A673 (cell line): ENCODE measurements at regions of chr7 and their contacts with region 1.

Region 1: DNA sequence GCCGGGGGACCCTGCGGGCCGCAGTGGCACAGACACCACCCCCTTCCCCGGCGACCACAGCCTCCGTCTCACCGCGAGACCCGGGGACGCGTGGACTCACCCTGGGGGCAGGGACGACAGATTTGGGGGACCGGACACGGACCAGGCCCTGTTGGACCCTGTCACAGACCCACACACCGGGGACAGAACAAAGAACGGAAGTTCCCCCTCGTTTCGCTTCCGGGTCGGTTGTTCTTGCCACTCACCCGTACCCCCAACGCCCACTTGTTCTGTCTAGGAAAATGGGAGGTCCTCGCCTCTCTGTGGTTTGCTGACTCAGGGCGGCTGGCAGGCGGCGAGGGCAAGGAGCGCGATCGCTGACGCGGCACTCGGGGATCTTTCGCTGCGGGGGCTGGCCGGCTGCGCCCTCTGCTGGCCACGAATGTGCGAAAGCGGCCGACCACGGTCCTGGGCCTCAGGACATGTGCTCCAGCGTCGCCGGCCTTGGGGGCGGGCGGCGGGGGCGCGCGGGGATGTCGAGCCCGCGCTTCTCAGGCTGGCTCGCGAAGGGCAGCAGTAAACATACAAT is at the start of gene ZNF3:
- DNase-seq: peak; percentile 100
- H3K4me3 ChIP-seq: peak within 1 kb of the TSS; percentile 73
- H3K27ac ChIP-seq: peak within 1 kb of the TSS; percentile 81
- H3K4me1 ChIP-seq: peaks cover 12% of the 10 kb centered on the region
- H3K27me3 ChIP-seq: no peaks in the 10 kb centered on the region
- CTCF ChIP-seq: peak; percentile 98
- total RNA-seq, gene ZNF3: 50.2 and 50.8 TPM in 2 replicates

Region 2: DNA sequence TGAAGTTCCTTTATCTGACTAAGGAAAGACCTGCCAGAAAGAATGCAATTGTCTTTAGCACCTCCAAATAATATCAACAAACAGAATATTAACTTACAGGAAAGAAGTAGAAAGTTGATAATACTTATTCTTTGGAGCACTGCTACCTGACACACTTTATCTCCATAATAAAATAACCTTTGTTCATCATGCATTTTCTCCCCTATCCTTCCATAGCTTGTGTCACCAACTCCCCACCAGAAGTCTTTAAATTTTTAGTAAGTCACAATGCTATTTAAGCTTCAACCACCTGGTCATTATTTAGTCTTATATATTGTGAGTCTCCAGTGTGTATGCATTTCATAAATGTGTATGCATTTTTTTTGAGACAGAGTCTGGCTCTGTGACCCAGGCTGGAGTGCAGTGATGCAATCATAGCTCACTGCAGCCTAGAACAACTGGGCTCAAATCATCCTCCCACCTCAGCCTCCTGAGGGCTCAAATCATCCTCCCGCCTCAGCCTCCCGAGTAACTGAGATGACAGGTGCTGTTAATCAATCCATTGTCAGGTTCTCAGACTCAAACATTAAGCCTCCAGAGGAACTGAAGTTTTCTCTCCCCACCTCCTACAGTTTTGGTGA is 261.1 kb before region 1 on chr7:
- CTCF ChIA-PET with region 1: no interaction called
- POLR2A ChIA-PET with region 1: interaction called, 11 read pairs
- intact Hi-C with region 1: no loop called
- DNase-seq: no peak
- H3K4me3 ChIP-seq: no peak overlapping the region
- H3K27ac ChIP-seq: no peak overlapping the region
- H3K4me1 ChIP-seq: no peaks in the 10 kb centered on the region
- H3K27me3 ChIP-seq: peaks cover 21% of the 10 kb centered on the region
- CTCF ChIP-seq: no peak

Region 3: GRCh38 chr7:99949638-99950228 is 131.9 kb before region 1 on chr7:
- CTCF ChIA-PET with region 1: no interaction called
- POLR2A ChIA-PET with region 1: interaction called, 17 read pairs
- intact Hi-C with region 1: no loop called
- DNase-seq: peak; percentile 22
- H3K4me3 ChIP-seq: no peak overlapping the region
- H3K27ac ChIP-seq: no peak overlapping the region
- H3K4me1 ChIP-seq: no peaks in the 10 kb centered on the region
- H3K27me3 ChIP-seq: no peaks in the 10 kb centered on the region
- CTCF ChIP-seq: peak; percentile 42

Region 4: DNA sequence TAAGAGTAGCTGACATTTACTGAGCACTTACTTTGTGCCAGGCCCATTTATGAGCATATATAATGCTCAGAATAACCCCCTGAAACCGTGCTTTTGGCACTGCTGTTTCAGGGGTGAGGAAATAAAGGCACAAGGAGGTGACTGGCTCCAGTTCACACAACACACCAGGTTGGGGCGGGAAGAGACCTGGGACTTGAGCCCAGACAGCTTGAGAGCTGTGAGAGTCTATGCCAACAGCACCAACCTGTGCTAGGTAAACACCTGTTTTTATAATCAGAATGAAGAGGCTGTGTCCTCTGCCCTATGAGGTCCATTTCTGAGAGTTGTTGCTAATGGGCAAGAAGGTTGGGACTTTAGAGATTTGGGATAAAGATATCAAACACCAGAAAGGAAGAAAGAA is 97.0 kb before region 1 on chr7:
- CTCF ChIA-PET with region 1: no interaction called
- POLR2A ChIA-PET with region 1: no interaction called
- intact Hi-C with region 1: no loop called
- DNase-seq: no peak
- H3K4me3 ChIP-seq: no peak overlapping the region
- H3K27ac ChIP-seq: no peak overlapping the region
- H3K4me1 ChIP-seq: no peaks in the 10 kb centered on the region
- H3K27me3 ChIP-seq: no peaks in the 10 kb centered on the region
- CTCF ChIP-seq: no peak

Region 5: DNA sequence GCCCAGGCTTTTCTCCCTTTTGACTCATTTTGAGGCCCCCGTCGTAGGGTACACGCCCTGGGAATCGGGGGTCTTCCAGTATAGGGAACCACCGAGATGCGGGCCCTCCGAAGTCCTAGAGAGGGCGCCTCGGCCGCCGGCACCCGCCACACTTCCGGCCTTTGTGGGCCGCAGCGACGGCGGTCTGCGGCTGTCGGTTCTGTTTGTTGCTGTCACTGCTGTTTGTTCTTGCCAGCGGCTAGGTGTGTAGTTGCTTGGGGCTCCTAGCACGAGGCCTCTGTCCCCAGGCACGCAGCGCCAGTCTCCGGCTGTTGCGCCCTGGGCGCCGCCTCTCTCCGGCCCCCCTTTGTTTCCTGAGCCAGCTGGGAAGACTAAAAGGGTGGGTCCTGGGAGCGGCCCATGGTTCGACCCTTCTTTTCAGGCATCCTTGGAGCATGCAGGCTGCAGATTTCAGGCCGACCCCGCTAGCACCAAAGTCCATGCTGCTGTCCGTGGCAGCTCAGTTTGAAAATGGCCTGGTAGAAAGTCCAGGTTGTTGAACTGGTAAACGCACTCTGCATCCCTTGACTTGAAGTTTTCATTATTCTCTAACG is 84.0 kb before region 1 on chr7:
- CTCF ChIA-PET with region 1: no interaction called
- POLR2A ChIA-PET with region 1: no interaction called
- intact Hi-C with region 1: loop called (anchors 5 kb)
- DNase-seq: peak; percentile 44
- H3K4me3 ChIP-seq: peak overlapping the region; percentile 50
- H3K27ac ChIP-seq: peak overlapping the region; percentile 46
- H3K4me1 ChIP-seq: peaks cover 5% of the 10 kb centered on the region
- H3K27me3 ChIP-seq: no peaks in the 10 kb centered on the region
- CTCF ChIP-seq: 0 out of 2 replicates have a peak, but pooled peaks have one; percentile 21

Region 6: DNA sequence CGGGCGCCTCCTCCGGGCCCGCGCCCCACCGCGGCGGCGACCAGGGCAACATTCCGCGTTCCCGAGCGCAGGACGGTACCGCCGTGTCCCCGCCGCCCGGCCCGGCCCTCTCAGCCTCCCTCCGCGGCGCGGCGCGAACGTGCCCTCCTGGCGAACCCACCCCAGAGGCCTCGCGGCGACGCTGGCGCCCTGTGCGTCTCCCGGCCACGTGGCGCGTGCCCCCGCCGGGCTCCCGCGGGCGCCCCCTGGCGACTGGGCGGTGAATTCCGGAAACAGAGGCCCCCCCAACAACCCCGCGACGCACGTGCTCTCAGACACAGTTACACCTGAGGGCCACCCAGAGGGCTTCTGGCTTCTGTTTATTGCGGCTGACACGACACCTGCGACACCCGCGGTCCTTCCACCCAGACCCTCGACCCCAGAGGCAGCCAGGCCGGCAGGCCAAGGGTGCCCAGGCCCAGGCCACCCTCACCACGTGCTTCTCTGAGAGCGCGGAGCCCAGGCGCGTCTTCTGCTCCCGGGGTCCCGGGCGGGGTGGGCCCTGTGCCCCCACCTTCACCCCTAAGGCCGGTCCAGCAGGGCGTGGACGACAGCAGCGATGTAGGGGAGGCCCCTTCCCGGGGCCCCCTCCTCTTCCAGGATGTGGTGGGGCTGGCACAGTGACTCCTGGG is 492.2 kb after region 1 on chr7 and contains the start of gene SAP25:
- CTCF ChIA-PET with region 1: no interaction called
- POLR2A ChIA-PET with region 1: no interaction called
- intact Hi-C with region 1: no loop called
- DNase-seq: no peak
- H3K4me3 ChIP-seq: no peak within 1 kb of the TSS
- H3K27ac ChIP-seq: no peak within 1 kb of the TSS
- H3K4me1 ChIP-seq: peaks cover 14% of the 10 kb centered on the region
- H3K27me3 ChIP-seq: no peaks in the 10 kb centered on the region
- CTCF ChIP-seq: 0 out of 2 replicates have a peak, but pooled peaks have one; percentile 12
- total RNA-seq, gene SAP25: 1.7 and 2.8 TPM in 2 replicates